ENCODE measurements at regions of chr12 and their contacts with region 1.

Region 1: DNA sequence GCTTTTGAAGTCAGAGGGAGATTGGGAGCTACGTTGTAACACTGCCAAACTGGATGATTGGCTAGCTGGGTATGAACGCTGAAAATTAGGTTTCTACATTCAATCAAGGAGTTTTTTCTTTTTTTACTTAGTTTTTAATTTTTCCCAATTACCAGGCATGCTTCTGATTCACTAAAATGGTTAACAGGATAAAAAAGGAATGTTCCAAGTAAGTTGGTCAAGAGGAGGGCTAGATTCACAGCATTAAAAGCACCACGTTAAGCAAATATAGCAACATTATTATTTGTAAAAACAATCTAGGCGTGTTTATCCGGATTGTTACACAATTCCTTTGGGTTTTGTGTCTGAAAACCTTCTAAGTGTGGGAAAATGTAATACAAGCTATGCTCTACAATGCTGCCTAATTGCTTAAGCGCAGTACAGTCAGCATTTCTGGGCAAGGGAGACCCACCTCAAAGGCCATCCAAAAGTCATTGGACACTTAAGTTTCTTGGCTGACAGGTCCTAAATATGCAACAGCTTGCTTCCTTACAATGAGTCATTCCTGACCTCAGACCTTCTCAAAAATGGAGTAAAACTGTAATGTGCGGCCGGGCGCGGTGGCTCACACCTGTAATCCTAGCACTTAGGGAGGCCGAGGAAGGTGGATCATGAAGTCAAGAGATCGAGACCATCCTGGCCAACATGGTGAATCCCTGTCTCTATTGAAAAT is 1.2 kb downstream of the RPLP0 start:
- DNase-seq: no peak
- CTCF ChIP-seq: no peak

Region 2: DNA sequence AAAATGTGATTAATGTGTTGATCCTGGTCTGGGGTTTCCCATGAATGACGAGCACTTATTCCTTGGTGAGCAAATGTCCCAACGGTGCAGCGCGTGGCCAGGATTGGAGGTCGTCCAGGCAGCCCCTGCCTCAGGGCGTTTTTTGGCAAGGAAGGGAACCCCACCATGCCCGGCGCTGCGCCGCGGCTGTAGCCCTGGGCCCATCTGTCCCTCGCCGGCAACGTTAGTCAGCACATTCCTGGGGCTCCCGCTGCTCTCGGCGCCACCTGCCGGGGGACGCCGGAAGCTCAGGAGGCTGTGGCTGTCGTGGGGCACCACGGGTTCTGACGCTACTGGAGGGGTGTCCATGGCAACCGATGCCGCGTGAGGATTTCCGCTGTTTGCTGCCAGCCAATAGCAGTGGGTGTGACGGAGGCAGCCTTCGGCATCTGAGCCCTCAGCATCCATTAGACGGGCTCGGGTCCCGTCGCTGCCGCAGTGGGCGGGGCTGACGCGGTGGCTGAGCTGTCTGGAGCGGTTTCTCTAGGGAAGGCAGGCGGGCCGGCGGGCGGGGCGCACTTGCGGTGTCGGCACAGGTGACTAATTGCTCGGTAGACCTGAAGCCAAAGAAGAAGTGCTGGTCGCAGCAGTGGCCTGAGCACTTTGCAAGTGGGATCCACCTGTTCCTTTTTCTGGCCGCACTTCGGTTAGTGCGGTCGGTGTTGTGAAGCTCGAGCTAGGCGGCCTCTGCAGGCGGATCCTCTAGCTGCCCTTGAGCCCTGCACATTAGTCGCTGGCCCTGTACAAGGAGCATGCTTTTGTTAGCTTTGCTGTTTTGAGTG is 112.7 kb before region 1 on chr12:
- CTCF ChIA-PET with region 1: interaction called, 3 read pairs
- POLR2A ChIA-PET with region 1: interaction called, 12 read pairs
- DNase-seq: peak; percentile 99
- CTCF ChIP-seq: peak; percentile 98

Region 3: DNA sequence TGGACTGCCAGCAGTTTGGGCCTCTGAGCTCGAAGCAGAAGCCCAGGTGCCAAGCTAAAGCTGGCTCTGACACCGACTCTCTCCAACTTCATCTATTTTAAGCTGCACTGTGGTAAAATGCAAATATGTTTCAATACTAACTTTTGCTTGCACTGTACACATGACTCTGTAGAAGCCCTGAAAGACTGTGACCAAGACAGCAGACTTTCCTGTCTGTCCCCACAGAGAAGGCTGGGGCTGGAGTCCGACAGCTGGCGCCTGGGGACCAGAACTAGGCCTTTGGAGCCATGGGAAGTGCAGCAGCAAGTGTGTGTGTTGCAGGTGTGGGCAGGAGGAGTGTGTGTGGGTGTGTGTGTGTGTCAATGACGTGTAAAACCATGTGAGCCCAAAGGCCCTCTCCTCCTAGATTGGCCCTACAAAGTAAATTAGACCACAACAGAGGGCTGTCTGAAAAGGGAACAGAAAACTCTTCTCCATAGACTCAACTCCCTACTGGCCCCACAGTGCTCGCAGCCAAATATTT is 66.8 kb before region 1 on chr12:
- CTCF ChIA-PET with region 1: interaction called, 7 read pairs
- POLR2A ChIA-PET with region 1: interaction called, 11 read pairs
- DNase-seq: peak; percentile 78
- CTCF ChIP-seq: no peak

Region 4: DNA sequence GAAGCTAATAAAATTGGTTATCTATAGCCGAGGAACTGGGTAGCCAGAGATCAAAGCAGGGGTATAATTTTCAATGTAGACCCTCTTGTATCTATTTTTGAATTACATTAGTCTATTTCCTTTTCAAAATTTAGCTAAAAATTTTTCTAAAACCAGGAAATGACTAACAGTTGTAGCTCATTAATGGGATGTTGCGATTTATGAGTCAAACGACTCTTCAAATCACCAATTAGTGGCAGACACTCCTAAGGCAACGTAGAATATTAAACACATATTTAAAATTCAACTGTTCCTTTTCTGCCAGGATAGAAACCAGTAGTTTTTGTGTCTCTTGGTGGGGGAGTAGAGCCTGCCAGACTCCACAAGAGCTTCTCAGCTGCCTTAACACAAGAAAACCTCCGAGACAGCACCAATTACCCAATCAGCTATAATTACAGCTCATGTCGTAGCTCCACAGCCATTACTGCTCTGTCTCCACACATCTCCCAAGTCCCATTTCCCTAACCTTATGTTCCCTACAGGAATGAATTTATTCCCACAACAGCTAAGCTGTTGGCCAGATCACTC is 32.1 kb before region 1 on chr12:
- CTCF ChIA-PET with region 1: interaction called, 14 read pairs
- POLR2A ChIA-PET with region 1: interaction called, 23 read pairs
- DNase-seq: no peak
- CTCF ChIP-seq: no peak

Region 5: GRCh38 chr12:120228291-120229070 is 28.7 kb after region 1 on chr12:
- CTCF ChIA-PET with region 1: interaction called, 23 read pairs
- POLR2A ChIA-PET with region 1: interaction called, 13 read pairs
- DNase-seq: peak; percentile 92
- CTCF ChIP-seq: peak; percentile 97

Region 6: DNA sequence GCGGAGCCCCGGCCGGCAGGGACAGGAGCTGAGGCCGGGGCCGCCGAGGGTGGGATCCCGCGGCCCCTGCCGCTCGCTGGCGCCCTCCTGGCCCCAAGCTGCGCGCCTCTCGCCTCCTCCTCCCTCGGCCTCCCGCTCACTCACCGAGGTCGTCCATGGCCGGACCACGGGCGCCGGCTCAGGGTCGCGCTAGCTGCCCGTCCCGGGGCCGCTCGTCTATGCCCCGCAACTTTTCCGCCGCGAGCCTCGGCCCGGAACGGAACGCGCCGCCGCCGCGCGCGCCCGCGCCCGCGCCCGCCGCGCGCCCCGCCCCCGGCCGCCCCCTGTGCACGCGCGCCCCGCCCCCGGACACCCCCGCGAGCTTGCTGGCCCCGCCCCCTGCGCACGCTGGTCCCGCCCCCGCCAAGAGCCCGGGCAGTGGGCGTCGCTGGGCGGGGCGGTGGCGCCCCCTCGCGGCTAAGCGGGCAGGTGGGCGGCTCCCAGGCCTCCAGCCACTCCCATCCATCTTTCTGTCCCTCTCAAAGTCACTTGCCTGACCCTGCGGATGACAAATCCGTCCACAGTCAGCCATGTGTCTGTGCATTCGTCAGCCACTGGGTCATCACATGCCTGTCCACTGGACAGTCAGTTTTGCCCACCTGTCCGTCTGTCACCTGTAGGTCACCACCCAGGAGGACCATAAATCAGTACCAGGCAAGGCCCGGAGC is 65.9 kb after region 1 on chr12 and contains the start of gene PXN:
- CTCF ChIA-PET with region 1: interaction called, 26 read pairs
- POLR2A ChIA-PET with region 1: interaction called, 21 read pairs
- DNase-seq: peak; percentile 96
- CTCF ChIP-seq: peak; percentile 78

Region 7: DNA sequence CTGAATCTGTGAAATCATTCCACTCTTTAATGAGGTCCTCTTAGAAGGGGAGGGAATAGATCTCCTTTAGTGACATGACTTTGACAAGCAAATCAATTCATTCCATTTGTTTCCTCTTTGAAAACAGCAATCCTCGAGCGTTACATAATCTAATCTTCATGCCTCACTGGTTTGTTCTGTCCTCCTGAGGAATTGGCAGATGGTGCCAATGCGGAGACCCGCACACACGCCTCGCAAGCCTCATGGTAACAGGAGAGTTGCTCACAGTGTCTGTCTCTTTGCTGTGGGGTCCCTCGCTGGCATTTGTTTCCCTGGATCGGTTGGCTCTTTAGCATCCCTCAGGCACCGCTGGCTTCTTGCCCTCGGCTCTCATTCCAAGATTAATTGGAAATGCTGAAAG is 430.4 kb after region 1 on chr12:
- CTCF ChIA-PET with region 1: no interaction called
- POLR2A ChIA-PET with region 1: no interaction called
- DNase-seq: no peak
- CTCF ChIP-seq: no peak